MCF 10A (cell line): ENCODE measurements at regions of chr19 and their contacts with region 1.

Region 1: DNA sequence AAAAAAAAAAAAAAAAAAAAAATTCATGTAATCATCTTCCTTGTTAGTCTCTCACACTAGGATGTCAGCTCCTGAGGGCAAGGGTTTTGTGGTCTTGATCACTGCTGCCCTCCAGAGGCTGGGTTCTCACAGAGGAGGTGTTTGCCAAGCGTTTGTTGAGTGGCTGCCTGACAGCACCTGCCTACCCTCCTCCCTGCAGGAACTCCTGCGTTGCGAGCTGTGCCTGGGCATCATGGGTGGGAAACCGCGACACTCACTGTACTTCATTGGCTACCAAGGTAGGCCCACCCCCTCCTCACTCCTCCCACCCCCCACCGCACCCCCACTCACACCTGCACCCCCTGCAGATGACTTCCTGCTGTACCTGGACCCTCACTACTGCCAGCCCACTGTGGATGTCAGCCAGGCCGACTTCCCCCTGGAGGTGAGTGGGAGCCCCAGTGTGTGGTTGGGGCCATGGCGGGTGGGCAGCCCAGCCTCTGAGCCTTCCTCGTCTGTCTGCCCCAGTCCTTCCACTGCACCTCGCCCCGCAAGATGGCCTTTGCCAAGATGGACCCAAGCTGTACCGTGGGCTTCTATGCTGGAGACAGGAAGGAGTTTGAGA is 8.1 kb downstream of the ATG4D start:
- DNase-seq: peak; percentile 72
- H3K4me3 Mint-ChIP-seq: no peak overlapping the region
- H3K27ac Mint-ChIP-seq: no peak overlapping the region
- H3K4me1 Mint-ChIP-seq: no peaks in the 10 kb centered on the region
- H3K27me3 Mint-ChIP-seq: no peaks in the 10 kb centered on the region
- CTCF ChIP-seq: peak; percentile 27

Region 2: DNA sequence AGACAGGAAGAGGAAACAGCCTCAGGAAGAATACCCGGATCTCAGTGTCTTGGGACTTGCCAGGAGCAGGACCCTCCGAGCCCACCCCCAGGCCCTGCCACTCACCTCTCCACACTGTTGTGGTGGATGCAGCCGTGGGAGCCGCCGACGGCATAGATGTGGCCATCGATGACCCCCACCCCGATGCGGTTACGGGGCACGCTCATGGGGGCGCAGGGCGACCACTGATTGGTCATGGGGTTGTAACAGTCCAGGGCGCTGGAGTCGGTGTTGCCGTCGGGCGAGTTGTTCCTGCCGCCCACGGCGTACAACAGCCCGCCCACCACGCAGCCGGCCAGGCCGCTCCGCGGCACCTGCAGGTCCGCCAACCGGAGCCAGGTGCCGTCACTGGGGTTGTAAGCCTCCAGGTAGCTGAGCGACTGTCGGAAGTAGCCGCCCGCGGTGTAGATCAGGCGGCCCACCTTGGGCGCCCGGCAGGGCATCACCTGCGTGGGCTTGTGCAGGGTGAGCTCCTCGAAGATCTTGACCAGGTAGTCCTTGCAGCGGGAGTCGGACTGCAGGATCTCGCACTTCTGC is 60.2 kb before region 1 on chr19:
- CTCF ChIA-PET with region 1: interaction called, 16 read pairs
- POLR2A ChIA-PET with region 1: no interaction called
- intact Hi-C with region 1: no loop called
- DNase-seq: no peak
- H3K4me3 Mint-ChIP-seq: no peak overlapping the region
- H3K27ac Mint-ChIP-seq: no peak overlapping the region
- H3K4me1 Mint-ChIP-seq: no peaks in the 10 kb centered on the region
- H3K27me3 Mint-ChIP-seq: no peaks in the 10 kb centered on the region
- CTCF ChIP-seq: no peak

Region 3: DNA sequence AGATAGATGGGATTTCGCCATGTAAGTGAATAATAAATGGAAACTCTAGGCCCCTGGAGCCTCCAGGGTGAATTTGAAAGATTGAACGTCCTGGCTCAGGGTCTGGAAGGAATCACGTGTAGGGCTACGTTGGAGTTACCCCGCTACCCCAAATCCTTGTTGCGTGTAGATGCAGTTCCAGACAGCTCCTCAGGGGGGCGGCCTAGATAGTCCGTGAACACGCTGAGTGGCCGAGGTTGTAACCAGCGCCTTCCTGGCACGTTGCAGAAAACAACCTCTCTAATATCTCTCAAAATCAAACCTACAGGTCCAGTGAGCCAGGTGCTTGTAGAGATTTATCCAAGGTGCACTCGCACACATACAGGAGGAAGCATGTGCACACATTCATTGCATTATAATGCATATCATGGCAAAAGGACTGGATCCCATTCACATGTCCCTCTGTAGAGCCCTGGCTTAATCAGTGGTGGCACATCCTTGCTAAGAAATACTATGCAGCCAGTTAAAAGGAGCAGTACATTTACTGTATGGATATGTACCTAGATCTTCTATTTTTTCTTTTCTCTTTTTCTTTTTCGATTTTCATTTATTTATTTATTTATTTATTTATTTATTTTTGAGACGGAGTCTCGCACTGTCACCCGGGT is 46.1 kb before region 1 on chr19:
- CTCF ChIA-PET with region 1: interaction called, 3 read pairs
- POLR2A ChIA-PET with region 1: interaction called, 3 read pairs
- intact Hi-C with region 1: loop called (anchors 1 kb)
- DNase-seq: peak; percentile 76
- H3K4me3 Mint-ChIP-seq: no peak overlapping the region
- H3K27ac Mint-ChIP-seq: no peak overlapping the region
- H3K4me1 Mint-ChIP-seq: no peaks in the 10 kb centered on the region
- H3K27me3 Mint-ChIP-seq: no peaks in the 10 kb centered on the region
- CTCF ChIP-seq: peak; percentile 66

Region 4: DNA sequence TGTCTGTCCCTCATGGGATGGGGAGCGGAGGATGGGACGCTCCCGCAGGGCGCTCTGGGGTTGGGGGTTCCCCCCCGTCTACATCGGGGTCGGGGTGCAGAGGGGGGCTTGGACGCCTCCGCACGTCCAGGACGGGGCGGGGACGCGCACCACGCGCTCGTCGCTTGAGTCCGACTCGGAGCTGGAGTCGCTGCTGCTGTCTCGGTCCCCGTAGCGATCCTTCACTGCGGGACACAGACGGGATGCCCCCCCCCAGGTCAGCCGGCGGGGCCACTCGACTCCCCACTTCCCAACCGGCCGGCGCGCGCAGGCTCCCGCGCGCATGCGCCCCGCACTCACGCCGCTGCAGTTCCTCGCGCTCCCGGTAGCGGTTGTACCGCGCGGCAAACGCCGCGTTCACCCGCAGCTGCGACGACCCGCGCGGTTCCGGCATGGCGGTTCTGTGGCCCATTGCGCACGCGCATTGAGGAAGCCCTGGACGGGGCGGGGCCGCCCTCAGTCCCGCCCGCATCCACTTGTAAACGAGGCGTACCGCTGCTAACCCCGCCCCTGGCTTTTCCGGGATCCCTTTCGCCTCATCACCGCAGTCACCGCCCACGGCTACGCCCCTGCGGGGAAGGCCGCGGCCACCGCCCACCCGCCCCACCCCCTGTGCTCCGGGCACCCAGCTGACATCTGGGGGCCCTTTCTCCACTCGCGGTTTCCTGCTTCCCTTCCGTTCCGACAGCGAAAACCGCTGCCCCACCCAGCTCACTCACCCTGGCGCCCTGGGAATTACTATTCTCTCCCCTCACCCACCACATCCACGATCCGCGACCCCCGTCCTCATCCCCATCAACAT is 14.0 kb after region 1 on chr19 and contains the start of gene KRI1:
- CTCF ChIA-PET with region 1: interaction called, 5 read pairs
- POLR2A ChIA-PET with region 1: interaction called, 23 read pairs
- intact Hi-C with region 1: no loop called
- DNase-seq: peak; percentile 98
- H3K4me3 Mint-ChIP-seq: peak within 1 kb of the TSS; percentile 96
- H3K27ac Mint-ChIP-seq: peak within 1 kb of the TSS; percentile 94
- H3K4me1 Mint-ChIP-seq: peaks cover 31% of the 10 kb centered on the region
- H3K27me3 Mint-ChIP-seq: no peaks in the 10 kb centered on the region
- CTCF ChIP-seq: no peak
- total RNA-seq, gene KRI1: 23.3 and 27.4 TPM in 2 replicates

Region 5: GRCh38 chr19:10597002-10597401 is 45.2 kb after region 1 on chr19:
- CTCF ChIA-PET with region 1: no interaction called
- POLR2A ChIA-PET with region 1: no interaction called
- intact Hi-C with region 1: no loop called
- DNase-seq: no peak
- H3K4me3 Mint-ChIP-seq: no peak overlapping the region
- H3K27ac Mint-ChIP-seq: no peak overlapping the region
- H3K4me1 Mint-ChIP-seq: no peaks in the 10 kb centered on the region
- H3K27me3 Mint-ChIP-seq: peaks cover 15% of the 10 kb centered on the region
- CTCF ChIP-seq: no peak